ENCODE measurements at regions of chr12 and their contacts with region 1.

Region 1: GRCh38 chr12:1583421-1584078 is 10.8 kb downstream of the FBXL14 start:
- DNase-seq: peak; percentile 90
- H3K4me3 ChIP-seq: peak overlapping the region; percentile 47
- H3K27ac ChIP-seq: no peak overlapping the region
- H3K4me1 ChIP-seq: peaks cover 40% of the 10 kb centered on the region
- CTCF ChIP-seq: peak; percentile 99

Region 2: DNA sequence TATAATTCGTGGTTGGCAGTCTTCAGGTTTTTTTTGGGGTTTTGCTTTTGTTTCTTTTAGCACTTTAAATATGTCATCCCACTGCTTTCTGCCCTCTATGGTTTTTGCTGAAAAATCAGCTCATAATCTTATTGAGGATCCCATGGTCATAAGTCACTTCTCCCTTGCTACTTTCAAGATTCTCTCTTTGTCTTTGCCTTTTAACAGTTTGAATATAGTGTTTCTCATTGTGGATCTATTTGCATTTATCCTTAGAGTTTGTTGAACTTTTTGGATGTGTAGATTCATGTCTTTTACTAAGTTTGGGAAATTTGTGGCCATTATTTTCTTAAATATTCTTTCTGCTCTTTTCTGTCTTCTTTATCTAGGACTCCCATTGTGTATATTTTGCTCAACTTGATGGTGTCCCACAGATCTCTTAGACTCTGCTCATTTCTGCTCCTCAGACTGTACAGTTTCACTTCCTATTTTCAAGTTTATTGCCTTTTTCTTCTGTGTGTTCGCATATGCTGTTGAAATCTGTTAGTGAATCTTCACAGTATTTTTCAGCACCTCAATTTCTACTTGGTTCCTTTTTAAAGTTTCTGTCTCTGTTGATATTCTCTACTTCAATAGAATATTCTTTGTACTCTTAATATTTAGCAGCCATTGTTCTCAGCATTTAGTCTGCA is 760.4 kb before region 1 on chr12:
- CTCF ChIA-PET with region 1: no interaction called
- POLR2A ChIA-PET with region 1: no interaction called
- intact Hi-C with region 1: loop called (anchors 10 kb)
- DNase-seq: peak; percentile 84
- H3K4me3 ChIP-seq: peak overlapping the region; percentile 42
- H3K27ac ChIP-seq: peak overlapping the region; percentile 70
- H3K4me1 ChIP-seq: peaks cover 30% of the 10 kb centered on the region
- CTCF ChIP-seq: no peak

Region 3: DNA sequence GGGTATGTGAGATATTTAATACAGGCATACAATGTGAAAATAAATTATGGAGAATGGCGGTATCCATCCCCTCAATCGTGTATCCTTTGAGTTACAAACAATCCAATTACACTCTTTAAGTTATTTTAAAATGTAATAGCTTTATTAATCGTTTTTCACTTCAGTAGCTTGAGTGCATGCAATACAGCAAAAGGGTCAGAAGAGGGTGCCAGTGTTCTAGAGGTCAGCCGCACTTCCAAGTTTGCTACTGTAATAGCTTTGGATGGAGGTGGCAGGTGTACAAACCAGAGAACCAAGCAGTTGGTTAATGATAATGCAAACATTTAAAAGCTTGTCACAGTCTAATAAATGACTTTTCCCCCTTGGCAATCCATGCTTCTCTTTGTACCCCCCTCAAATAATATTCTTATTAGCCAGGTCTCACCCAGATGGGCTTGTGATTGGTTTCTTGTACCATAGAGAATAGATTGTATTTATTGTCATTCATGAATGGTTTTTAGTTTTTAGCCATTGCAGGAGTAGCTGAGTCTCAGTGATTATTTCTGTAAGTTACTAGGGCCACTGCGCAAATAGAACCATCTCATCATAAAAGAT is 465.5 kb before region 1 on chr12:
- CTCF ChIA-PET with region 1: interaction called, 8 read pairs
- POLR2A ChIA-PET with region 1: interaction called, 4 read pairs
- intact Hi-C with region 1: loop called (anchors 1 kb)
- DNase-seq: peak; percentile 81
- H3K4me3 ChIP-seq: no peak overlapping the region
- H3K27ac ChIP-seq: no peak overlapping the region
- H3K4me1 ChIP-seq: peaks cover 4% of the 10 kb centered on the region
- CTCF ChIP-seq: peak; percentile 99

Region 4: GRCh38 chr12:1282670-1283335 is 300.7 kb before region 1 on chr12:
- CTCF ChIA-PET with region 1: no interaction called
- POLR2A ChIA-PET with region 1: no interaction called
- intact Hi-C with region 1: loop called (anchors 5 kb)
- DNase-seq: no peak
- H3K4me3 ChIP-seq: no peak overlapping the region
- H3K27ac ChIP-seq: no peak overlapping the region
- H3K4me1 ChIP-seq: no peaks in the 10 kb centered on the region
- CTCF ChIP-seq: no peak

Region 5: GRCh38 chr12:1517007-1517406 is 66.5 kb before region 1 on chr12:
- CTCF ChIA-PET with region 1: interaction called, 5 read pairs
- POLR2A ChIA-PET with region 1: interaction called, 4 read pairs
- intact Hi-C with region 1: loop called (anchors 1 kb)
- DNase-seq: peak; percentile 75
- H3K4me3 ChIP-seq: no peak overlapping the region
- H3K27ac ChIP-seq: no peak overlapping the region
- H3K4me1 ChIP-seq: peaks cover 13% of the 10 kb centered on the region
- CTCF ChIP-seq: peak; percentile 100

Region 6: DNA sequence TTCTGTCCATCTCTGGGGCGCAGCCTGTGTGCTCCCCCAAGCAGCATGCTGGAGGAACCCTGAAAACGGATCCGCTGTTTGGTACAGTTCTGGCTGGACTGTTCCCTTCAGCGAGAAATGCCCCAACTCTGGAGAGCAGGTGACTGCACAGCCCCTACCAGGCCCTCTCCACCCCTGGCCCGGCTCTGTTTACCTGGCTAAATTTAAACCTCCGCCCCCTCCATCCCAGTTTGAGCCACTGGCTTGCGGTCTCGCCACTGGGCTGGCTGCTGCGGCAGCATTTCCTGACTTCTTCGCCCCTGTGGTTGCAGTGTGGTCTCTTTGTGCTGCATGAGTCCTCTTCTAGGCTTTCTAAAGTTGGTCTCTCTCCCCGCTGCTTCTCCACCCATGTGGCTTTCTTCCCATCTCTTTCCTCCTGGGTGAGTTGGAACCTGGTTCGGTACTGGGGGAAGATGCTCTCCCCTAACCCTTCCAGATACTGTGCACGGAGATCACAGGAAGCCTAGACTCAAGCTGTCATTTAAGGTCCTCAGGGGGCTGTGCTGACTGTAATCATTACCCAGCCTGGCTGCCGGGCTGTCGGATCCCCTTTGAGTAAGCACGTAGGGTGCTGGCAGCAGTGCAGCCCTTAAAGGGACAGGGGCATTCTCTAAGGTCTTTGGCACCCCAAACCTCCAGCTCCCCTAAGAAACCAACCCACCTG is 49.8 kb before region 1 on chr12:
- CTCF ChIA-PET with region 1: no interaction called
- POLR2A ChIA-PET with region 1: no interaction called
- intact Hi-C with region 1: loop called (anchors 1 kb)
- DNase-seq: peak; percentile 83
- H3K4me3 ChIP-seq: peak overlapping the region; percentile 68
- H3K27ac ChIP-seq: peak overlapping the region; percentile 79
- H3K4me1 ChIP-seq: peaks cover 49% of the 10 kb centered on the region
- CTCF ChIP-seq: 0 out of 2 replicates have a peak, but pooled peaks have one; percentile 31

Region 7: DNA sequence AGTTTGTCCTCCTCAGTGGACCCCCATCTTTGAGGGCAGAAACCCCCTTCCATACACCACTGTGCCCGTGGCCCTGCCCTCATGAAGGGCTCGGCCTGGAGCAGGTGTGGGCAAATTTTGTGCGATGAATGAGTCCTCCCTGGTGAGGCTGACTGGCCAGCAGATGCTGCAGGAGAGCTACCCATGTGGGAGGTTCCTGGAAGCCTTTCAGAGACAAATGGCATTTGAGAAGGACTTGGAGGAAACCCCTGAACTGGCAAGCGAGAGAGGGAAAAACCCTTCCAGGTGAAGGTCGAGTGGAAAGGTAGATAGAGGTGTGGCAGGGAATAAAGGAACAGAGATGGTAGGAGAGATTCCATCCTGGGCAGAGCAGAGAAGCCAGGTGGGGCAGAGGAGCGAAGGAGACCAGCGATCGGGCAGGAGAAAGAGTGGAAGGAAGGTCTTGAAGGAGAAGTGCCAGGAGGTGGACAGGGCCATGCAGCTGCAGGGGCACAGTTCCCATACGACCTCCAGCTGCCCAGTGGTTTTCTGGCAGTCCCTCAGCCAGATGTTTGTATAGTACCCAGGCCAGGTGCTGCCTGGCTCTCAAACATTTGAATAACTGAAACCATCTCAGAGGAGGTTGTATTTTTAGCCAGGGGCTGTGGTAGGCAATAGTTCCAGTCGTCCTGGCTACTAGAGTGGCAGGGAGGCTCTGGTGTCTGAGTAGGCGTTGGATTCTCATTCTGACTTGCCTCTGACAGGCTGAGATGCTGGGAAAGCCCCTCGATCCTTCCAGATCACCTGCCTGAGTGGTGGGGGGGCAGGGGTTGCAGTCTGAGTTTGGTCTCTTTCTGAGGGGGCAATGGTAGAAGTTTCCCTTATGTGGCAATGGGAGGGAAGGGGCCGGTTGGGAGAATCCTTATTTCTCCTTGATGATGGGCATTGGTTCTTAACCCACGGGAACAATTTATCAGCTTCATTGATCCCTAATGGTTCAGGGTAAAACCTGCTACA is 29.3 kb before region 1 on chr12:
- CTCF ChIA-PET with region 1: no interaction called
- POLR2A ChIA-PET with region 1: interaction called, 3 read pairs
- intact Hi-C with region 1: loop called (anchors 2 kb)
- DNase-seq: peak; percentile 96
- H3K4me3 ChIP-seq: peak overlapping the region; percentile 49
- H3K27ac ChIP-seq: peak overlapping the region; percentile 89
- H3K4me1 ChIP-seq: peaks cover 45% of the 10 kb centered on the region
- CTCF ChIP-seq: no peak